PC-9 (cell line): ENCODE measurements at regions of chr7 and their contacts with region 1.

Region 1: GRCh38 chr7:92621026-92621540 is 30.9 kb upstream of the FAM133B start:
- DNase-seq: peak; percentile 70 to 75
- H3K4me3 ChIP-seq: no peak overlapping the region
- H3K27ac ChIP-seq: peak overlapping the region; percentile 34; the same call in 1 of the 2 replicates
- H3K4me1 ChIP-seq: peaks cover 23% of the 10 kb centered on the region
- H3K27me3 ChIP-seq: no peaks in the 10 kb centered on the region
- CTCF ChIP-seq: peak; percentile 84

Region 2: GRCh38 chr7:92823042-92823441 is 202.0 kb after region 1 on chr7:
- CTCF ChIA-PET with region 1: no interaction called
- POLR2A ChIA-PET with region 1: interaction called, 31 read pairs
- intact Hi-C with region 1: no loop called
- DNase-seq: no peak
- H3K4me3 ChIP-seq: no peak overlapping the region
- H3K27ac ChIP-seq: no peak overlapping the region
- H3K4me1 ChIP-seq: no peaks in the 10 kb centered on the region
- H3K27me3 ChIP-seq: no peaks in the 10 kb centered on the region
- CTCF ChIP-seq: no peak

Region 3: GRCh38 chr7:92916674-92917224 is 295.7 kb after region 1 on chr7:
- CTCF ChIA-PET with region 1: no interaction called
- POLR2A ChIA-PET with region 1: no interaction called
- intact Hi-C with region 1: loop called (anchors 5 kb)
- DNase-seq: peak; percentile 86 to 95
- H3K4me3 ChIP-seq: no peak overlapping the region
- H3K27ac ChIP-seq: peak overlapping the region; percentile 83
- H3K4me1 ChIP-seq: peaks cover 18% of the 10 kb centered on the region
- H3K27me3 ChIP-seq: no peaks in the 10 kb centered on the region
- CTCF ChIP-seq: no peak

Region 4: DNA sequence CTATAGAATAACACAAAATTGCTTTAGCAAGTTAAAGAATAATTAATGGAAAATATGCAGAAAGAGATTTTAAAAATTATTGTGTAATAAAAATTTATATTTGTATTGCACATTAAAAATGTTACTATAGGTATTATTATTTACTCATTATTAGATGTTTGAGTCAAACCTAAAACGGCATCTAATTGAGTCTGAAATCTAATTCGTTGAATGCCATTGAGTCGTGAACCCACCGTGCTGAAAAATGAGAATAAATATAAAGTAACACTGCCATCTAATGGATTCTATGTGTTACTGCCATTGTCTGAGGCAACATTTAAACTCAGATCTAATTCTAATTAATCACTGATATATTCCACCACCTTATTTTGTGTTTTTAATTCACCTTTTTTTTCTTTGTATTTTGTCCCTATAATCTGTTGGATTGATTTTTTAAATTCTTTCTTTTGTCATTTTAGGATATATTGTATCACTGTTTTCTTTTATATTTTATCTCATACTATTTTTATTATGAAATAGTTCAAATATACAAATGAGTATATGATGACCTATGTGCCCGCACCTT is 434.5 kb after region 1 on chr7:
- CTCF ChIA-PET with region 1: no interaction called
- POLR2A ChIA-PET with region 1: no interaction called
- intact Hi-C with region 1: loop called (anchors 1 kb)
- DNase-seq: peak in 1 of 2 experiments; percentile 50
- H3K4me3 ChIP-seq: no peak overlapping the region
- H3K27ac ChIP-seq: no peak overlapping the region
- H3K4me1 ChIP-seq: no peaks in the 10 kb centered on the region
- H3K27me3 ChIP-seq: no peaks in the 10 kb centered on the region
- CTCF ChIP-seq: peak; percentile 87